HepG2 (cell line): ENCODE measurements at regions of chr2 and their contacts with region 1.

Region 1: DNA sequence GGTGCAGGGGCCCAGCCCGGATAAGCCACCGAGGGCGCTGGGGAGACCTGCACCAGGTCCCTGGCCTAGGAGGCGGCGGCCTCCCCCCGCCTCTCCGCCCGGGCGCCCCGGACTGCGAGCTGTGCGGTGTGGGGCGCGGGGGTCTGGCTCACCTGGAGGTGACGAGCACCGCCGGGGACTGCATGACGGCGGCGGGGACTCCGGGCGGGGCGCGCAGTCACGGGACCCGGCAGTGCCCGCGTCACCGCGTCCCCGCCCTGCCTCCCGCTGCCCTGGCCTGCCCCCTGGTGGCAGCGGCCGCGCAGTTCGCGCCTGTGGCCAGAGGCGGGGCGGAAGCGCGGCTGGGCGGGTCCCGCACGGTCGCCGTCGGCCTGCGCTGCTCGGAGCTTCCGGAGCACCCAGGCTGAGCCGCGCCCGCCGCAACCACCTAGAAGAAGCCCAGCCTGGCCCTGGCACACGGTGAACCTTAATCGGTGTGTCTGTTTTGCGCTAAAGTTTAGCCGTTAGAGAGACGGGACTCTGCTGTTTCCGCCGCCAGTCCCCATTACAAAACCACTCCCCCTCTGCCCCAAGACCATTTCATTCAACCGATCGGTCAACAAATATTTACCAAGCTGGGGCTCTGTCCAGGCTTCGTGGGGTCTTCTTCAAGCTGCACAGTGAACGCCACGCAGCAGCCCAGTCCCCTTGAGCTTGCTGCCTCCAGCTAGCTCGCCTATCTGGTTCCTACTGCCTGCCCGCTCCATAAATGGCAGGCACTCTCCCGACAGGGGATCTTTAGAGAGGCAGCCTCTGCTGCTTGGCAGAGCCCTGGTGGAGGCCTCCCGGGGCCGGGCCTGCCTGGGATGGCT is at the start of gene HS1BP3:
- DNase-seq: peak; percentile 67
- ATAC-seq: peak; percentile 94
- H3K4me3 ChIP-seq: peak within 1 kb of the TSS; percentile 75 to 95 (median 81)
- H3K27ac ChIP-seq: peak within 1 kb of the TSS; percentile 60
- H3K4me1 ChIP-seq: peaks cover 58% of the 10 kb centered on the region
- H3K27me3 ChIP-seq: peaks cover 1 to 12% of the 10 kb centered on the region in 2 experiments; a peak in 4 of 5 replicates
- CTCF ChIP-seq: peak; percentile 89
- EP300 ChIP-seq: 0 out of 4 replicates have a peak, but pooled peaks of 1 of the 2 experiments have one; percentile 11
- POLR2A ChIP-seq: peak in 1 of 2 experiments; percentile 53; a peak in 1 of 4 replicates
- RAD21 ChIP-seq: peak; percentile 98
- total RNA-seq, gene HS1BP3: 22.0 and 22.8 TPM in 2 replicates

Region 2: DNA sequence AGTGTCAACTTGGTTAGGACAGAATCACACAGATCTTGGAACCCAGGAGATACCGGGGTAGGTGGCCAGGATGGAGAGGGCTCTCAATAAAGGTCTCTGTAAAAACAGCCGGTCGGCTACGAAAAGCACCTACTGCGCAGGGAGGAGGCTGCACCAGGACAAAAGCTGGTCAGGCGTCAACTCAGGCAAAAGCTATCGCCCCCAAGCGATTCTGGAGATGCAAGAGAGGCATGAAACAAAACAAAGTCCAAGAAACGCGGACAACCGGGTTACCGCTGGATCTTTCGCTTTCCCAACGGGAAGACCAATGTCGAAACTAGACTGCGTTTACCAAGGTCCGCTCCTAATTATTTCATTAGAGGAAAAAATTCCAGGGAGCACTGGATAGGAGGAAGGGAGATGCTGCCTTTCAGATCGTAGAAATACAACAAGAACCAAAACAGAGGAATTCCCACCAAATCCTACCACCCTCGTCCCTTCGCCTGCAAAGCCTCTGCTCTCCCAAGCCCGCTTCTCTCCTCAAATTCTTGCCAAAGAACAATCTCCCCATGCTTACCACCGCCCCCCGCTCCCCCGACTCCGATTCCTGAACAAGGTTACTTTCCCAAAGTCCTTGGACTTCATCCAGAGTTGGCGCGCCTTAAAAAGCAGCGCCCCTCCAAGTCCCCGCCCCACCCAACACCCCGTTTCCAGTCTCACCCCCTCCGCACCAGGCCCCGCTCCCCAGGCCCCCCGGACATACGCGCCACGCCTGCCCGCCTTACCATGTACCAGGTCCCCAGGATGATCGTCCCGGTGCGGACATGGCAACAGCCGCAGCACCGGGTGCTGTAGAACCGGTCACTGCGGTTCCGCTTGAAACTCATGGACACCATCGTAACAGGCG is 600.2 kb before region 1 on chr2:
- CTCF ChIA-PET with region 1: no interaction called
- POLR2A ChIA-PET with region 1: no interaction called
- in situ Hi-C with region 1: no loop called
- intact Hi-C with region 1: no loop called
- DNase-seq: peak; percentile 81
- ATAC-seq: peak; percentile 55
- H3K4me3 ChIP-seq: peak overlapping the region; percentile 84 to 97 (median 92)
- H3K27ac ChIP-seq: peak overlapping the region; percentile 97
- H3K4me1 ChIP-seq: peaks cover 62% of the 10 kb centered on the region
- H3K27me3 ChIP-seq: no peaks in the 10 kb centered on the region; a peak in 1 of 5 replicates
- CTCF ChIP-seq: peak; percentile 72
- EP300 ChIP-seq: no peak
- POLR2A ChIP-seq: no peak
- RAD21 ChIP-seq: peak; percentile 43

Region 3: GRCh38 chr2:20398956-20399567 is 252.0 kb before region 1 on chr2:
- CTCF ChIA-PET with region 1: interaction called, 11 read pairs
- POLR2A ChIA-PET with region 1: interaction called, 5 read pairs
- in situ Hi-C with region 1: no loop called
- intact Hi-C with region 1: no loop called
- DNase-seq: no peak
- ATAC-seq: no peak
- H3K4me3 ChIP-seq: no peak overlapping the region
- H3K27ac ChIP-seq: no peak overlapping the region
- H3K4me1 ChIP-seq: no peaks in the 10 kb centered on the region
- H3K27me3 ChIP-seq: peaks cover 2 to 38% of the 10 kb centered on the region in 2 experiments
- CTCF ChIP-seq: no peak
- EP300 ChIP-seq: no peak
- POLR2A ChIP-seq: no peak
- RAD21 ChIP-seq: no peak

Region 4: DNA sequence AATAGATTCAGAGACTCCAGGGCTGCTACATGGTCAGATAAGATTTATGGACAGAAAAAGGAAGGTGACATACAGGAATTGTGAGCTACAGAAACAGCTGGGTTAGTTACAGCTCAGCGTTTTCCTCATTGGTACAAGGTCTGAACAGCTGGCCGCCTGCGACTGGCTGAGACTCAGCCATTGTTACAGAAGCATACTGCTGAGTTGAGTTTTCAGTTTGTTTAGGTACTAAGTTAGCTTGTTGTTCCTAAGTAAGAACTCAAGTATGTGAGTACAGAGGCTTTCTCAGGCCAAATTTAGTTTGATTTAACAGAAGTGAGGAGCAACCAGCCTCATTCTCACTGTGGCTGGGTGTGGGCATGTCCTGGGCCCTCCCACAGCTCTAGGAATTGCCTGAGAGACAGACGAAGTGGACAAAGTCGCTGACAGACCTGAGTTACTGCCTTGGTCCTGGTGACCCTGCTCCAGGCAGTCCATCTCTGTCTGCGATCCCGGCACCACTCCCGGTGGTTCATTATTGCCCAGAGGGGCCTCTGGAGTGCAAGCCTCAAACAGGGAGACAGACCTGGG is 232.0 kb before region 1 on chr2:
- CTCF ChIA-PET with region 1: no interaction called
- POLR2A ChIA-PET with region 1: interaction called, 12 read pairs
- in situ Hi-C with region 1: no loop called
- intact Hi-C with region 1: no loop called
- DNase-seq: peak; percentile 65
- ATAC-seq: peak; percentile 79
- H3K4me3 ChIP-seq: peak overlapping the region; percentile 38 to 68 (median 42); a peak in 5 of 6 replicates
- H3K27ac ChIP-seq: peak overlapping the region; percentile 61
- H3K4me1 ChIP-seq: peaks cover 95% of the 10 kb centered on the region
- H3K27me3 ChIP-seq: peaks cover 1 to 13% of the 10 kb centered on the region in 2 experiments
- CTCF ChIP-seq: no peak
- EP300 ChIP-seq: no peak
- POLR2A ChIP-seq: 0 out of 4 replicates have a peak, but pooled peaks of 1 of the 2 experiments have one; percentile 32
- RAD21 ChIP-seq: no peak

Region 5: GRCh38 chr2:20666304-20667150 is 15.4 kb after region 1 on chr2 and contains the start of gene GDF7:
- CTCF ChIA-PET with region 1: no interaction called
- POLR2A ChIA-PET with region 1: interaction called, 44 read pairs
- in situ Hi-C with region 1: no loop called
- intact Hi-C with region 1: no loop called
- DNase-seq: peak; percentile 46
- ATAC-seq: peak; percentile 60
- H3K4me3 ChIP-seq: peak within 1 kb of the TSS; percentile 81 to 87 (median 87)
- H3K27ac ChIP-seq: peak within 1 kb of the TSS; percentile 65
- H3K4me1 ChIP-seq: peaks cover 49% of the 10 kb centered on the region
- H3K27me3 ChIP-seq: peaks cover 20 to 43% of the 10 kb centered on the region in 2 experiments; a peak in 4 of 5 replicates
- CTCF ChIP-seq: peak; percentile 71
- EP300 ChIP-seq: no peak
- POLR2A ChIP-seq: no peak
- RAD21 ChIP-seq: no peak
- total RNA-seq, gene GDF7: 10.2 and 15.0 TPM in 2 replicates

Region 6: GRCh38 chr2:20822535-20823490 is 171.7 kb after region 1 on chr2 and contains the start of gene LDAH:
- CTCF ChIA-PET with region 1: no interaction called
- POLR2A ChIA-PET with region 1: interaction called, 13 read pairs
- in situ Hi-C with region 1: no loop called
- intact Hi-C with region 1: no loop called
- DNase-seq: peak; percentile 91
- ATAC-seq: peak; percentile 91
- H3K4me3 ChIP-seq: peak within 1 kb of the TSS; percentile 79 to 90 (median 87)
- H3K27ac ChIP-seq: peak within 1 kb of the TSS; percentile 91
- H3K4me1 ChIP-seq: peaks cover 13% of the 10 kb centered on the region
- H3K27me3 ChIP-seq: no peaks in the 10 kb centered on the region; a peak in 1 of 5 replicates
- CTCF ChIP-seq: no peak
- EP300 ChIP-seq: peak in 1 of 2 experiments; percentile 62; a peak in 2 of 4 replicates
- POLR2A ChIP-seq: peak; percentile 93 to 95
- RAD21 ChIP-seq: peak; percentile 59; the same call in 1 of the 2 replicates
- total RNA-seq, gene LDAH: 46.2 and 66.4 TPM in 2 replicates